AG04449 (cell line): ENCODE measurements at regions of chr1 and their contacts with region 1.

Region 1: GRCh38 chr1:109397538-109398342 is at the start of gene SORT1:
- DNase-seq: no peak
- H3K4me3 ChIP-seq: peak within 1 kb of the TSS; percentile 63
- CTCF ChIP-seq: no peak

Region 2: GRCh38 chr1:109201123-109201703 is 196.5 kb before region 1 on chr1:
- CTCF ChIA-PET with region 1: interaction called, 56 read pairs
- POLR2A ChIA-PET with region 1: no interaction called
- DNase-seq: no peak
- H3K4me3 ChIP-seq: no peak overlapping the region
- CTCF ChIP-seq: peak; percentile 69

Region 3: DNA sequence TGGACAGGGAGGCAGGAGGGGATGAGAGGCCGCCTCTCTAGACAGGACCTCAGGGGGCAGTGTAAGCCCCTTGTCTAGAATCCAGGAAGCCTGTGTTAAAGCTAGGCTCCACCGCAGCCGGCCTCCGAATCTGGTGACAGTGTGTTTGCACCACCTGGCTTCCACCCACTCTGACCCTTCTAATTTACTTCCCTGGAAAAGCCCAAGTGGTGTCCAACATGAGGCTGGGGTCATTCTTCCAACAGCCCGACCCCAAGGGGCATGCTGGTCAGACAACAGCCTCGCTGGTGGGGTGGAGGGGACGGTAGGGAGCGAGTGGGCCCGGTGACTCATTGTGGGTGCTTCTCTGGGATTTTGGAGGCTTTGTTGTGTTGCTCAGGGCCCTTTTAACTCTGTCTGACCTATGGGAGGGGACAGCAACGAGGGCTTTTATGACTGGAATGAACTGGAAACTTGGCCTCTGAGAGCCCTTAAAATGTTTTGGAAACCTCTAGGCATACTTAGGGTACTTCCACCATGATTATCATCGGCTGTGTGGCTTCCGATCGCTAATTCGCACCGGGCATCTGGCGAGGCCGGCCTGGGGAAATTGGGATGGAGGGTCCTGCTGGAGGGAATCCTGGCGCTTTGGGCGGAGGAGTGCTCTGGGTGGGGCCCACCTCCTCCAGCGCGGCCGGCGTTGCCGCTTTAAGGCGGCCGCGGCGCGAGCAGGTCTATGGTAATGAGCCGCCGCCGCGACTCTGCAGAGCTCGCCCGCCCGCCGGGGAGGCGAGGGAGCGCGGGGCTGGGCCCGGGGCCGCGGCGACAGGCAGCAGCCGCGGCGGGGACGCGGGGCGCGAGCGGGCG is 148.7 kb before region 1 on chr1 and contains the start of gene CELSR2:
- CTCF ChIA-PET with region 1: interaction called, 45 read pairs
- POLR2A ChIA-PET with region 1: no interaction called
- DNase-seq: no peak
- H3K4me3 ChIP-seq: peak within 1 kb of the TSS; percentile 52
- CTCF ChIP-seq: no peak

Region 4: DNA sequence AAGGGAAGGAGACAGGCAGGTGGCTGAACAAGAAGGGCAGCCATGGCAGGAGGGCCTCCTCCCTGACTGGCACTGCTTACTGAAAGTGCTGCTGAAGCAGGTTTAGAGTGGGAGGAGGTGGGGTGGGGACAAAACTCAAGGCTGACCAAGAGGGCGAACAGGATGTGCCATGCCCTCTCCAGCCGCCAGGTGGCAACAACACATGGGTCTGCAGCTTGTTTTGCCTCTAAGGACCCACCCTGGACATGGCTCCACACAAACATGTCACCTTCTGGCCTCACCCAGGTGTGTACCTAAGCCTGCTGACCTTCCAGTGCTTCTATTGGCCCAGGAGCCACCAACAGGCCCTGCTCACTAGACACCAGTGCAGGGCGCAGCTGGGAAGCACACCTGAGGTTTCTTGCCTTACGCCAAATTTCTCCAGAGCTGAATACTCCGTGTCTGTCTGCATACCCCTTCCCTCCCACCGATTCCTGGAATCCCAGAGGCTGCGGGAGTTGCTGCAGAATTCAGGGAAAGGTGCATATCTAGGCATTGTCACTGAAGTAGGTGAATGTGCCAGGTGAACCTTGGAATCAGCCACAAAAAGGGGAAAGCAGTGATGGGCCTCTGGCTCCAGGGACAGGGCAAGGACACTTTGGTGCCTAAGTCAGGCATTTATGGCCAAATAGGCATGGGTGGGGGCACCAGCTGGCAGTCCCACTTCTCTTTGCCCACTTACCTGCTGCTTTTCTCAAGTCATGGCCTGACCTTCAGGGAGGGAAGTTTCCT is 120.1 kb before region 1 on chr1:
- CTCF ChIA-PET with region 1: interaction called, 340 read pairs
- POLR2A ChIA-PET with region 1: interaction called, 10 read pairs
- DNase-seq: no peak
- H3K4me3 ChIP-seq: no peak overlapping the region
- CTCF ChIP-seq: peak; percentile 94

Region 5: GRCh38 chr1:109331113-109331512 is 66.6 kb before region 1 on chr1:
- CTCF ChIA-PET with region 1: no interaction called
- POLR2A ChIA-PET with region 1: no interaction called
- DNase-seq: no peak
- H3K4me3 ChIP-seq: no peak overlapping the region
- CTCF ChIP-seq: no peak

Region 6: DNA sequence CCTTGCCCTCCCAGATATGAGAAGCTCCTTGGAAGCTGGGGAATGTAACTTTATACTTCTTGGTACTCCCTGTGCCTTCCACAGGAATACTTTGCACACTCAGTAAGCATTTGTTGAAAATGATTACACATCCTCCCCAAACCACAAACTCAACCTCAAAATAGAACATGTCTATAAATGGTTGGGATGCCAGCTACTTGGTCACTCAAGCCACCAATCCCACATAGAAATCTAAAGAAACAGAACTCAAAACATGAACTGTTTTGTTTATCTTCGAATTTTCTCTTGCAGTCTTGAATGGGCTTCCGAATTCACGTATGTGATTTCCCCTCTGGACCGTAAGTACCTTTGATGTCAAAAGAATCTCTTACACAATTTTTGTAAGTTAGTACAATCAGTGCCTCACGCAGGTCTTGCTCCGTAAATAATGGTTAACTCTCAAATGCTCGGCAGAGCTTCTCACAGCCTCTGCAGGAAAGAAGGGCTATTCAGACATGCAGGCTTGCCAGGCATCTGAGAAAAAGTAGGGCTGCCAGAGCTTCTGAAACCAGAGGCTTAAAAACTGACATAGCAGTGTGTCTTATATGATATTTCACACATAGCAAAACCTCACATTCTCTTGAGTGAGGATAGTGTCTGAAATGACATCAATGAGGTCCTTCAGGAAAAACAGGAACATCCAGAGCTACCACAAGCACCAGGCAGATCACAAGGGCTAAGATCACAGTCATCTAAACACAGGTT is 26.9 kb before region 1 on chr1:
- CTCF ChIA-PET with region 1: interaction called, 10 read pairs
- POLR2A ChIA-PET with region 1: interaction called, 7 read pairs
- DNase-seq: peak; percentile 94
- H3K4me3 ChIP-seq: peak overlapping the region; percentile 37
- CTCF ChIP-seq: no peak

Region 7: DNA sequence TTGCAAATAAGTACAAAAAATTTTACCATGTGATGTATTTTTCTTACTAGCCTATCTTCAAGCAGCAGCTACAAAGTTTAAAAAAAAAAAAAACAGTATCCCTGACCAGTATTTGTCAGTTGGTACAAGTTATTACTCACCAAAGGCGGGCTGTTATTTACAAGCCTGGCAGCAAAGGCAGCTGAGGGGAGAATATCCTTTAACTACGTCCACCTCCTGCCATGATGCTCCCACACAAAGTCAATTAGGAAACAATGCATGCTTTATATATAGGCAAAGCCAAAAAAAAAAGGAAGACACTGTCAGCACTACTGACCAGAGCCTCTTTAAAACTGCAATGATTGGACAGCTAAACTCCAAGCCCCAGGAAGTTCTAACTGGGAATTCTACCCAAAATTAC is 14.8 kb after region 1 on chr1:
- CTCF ChIA-PET with region 1: interaction called, 44 read pairs
- POLR2A ChIA-PET with region 1: no interaction called
- DNase-seq: no peak
- H3K4me3 ChIP-seq: no peak overlapping the region
- CTCF ChIP-seq: no peak

Region 8: DNA sequence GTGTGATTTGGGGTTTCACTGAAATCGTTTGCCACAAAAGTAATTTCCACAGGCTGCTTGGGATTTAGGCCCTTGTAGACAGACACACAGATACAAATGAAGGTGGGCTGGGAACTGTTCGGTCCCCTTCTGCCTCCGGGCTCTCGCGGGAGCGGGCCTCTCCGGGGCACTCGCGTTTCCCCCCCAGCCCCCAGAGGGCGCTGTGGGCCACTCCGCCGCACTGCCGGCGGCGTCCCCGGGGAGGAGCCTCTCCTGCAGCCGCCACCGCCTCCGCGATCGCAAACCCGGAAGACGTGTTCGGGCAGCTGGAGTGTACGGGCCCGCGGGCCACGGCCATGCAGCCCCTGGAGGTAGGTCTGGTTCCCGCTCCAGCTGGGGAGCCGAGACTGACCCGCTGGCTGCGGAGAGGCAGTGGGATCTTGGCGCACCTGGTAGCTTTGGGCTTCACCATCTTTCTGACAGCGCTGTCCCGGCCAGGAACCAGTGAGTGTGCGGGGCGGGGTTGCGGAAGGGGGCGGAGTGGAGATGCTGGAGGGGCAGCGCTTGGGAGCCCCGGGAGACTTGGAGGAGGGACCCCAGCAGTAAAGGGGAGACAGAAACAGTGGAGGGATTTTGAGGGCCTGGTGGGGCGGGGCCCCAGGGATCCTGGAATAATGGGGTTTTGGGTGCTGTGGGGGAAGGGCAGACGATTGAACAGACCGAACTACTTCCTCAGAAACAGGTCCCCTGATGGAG is 96.2 kb after region 1 on chr1 and contains the start of gene CYB561D1:
- CTCF ChIA-PET with region 1: interaction called, 10 read pairs
- POLR2A ChIA-PET with region 1: no interaction called
- DNase-seq: no peak
- H3K4me3 ChIP-seq: peak within 1 kb of the TSS; percentile 100
- CTCF ChIP-seq: peak; percentile 98

Region 9: GRCh38 chr1:109567877-109568672 is 170.3 kb after region 1 on chr1:
- CTCF ChIA-PET with region 1: no interaction called
- POLR2A ChIA-PET with region 1: no interaction called
- DNase-seq: no peak
- H3K4me3 ChIP-seq: no peak overlapping the region
- CTCF ChIP-seq: no peak